HepG2 (cell line): ENCODE measurements at regions of chr2 and their contacts with region 1.

Region 1: DNA sequence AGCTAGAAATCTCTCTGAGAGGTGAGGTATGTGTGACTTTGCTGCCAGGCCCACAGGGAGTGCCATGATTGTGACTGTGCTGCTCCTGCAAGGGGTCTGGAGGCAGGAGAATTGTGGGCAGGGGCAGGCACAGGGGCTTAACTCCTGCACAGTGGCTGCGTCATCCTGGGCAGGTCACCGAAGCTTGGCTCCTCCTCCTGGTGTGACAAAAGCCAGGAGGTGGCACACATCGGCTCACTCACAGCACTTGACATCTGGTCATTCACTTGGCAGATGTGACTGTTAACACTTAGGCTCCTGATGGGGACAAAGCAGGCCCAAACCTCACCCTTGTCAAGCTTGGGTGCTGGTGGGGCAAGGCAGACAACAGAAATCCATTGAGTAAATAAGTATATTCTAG is 36.4 kb upstream of the GLI2 start:
- DNase-seq: no peak
- ATAC-seq: no peak
- H3K4me3 ChIP-seq: no peak overlapping the region
- H3K27ac ChIP-seq: no peak overlapping the region
- H3K4me1 ChIP-seq: no peaks in the 10 kb centered on the region
- H3K27me3 ChIP-seq: peaks cover 13 to 76% of the 10 kb centered on the region in 2 experiments
- CTCF ChIP-seq: no peak
- EP300 ChIP-seq: no peak
- POLR2A ChIP-seq: no peak
- RAD21 ChIP-seq: no peak

Region 2: GRCh38 chr2:120758181-120759144 is 59.2 kb after region 1 on chr2:
- CTCF ChIA-PET with region 1: no interaction called
- POLR2A ChIA-PET with region 1: no interaction called
- in situ Hi-C with region 1: no loop called
- intact Hi-C with region 1: loop called (anchors 1 kb)
- DNase-seq: no peak
- ATAC-seq: peak; percentile 34
- H3K4me3 ChIP-seq: no peak overlapping the region
- H3K27ac ChIP-seq: no peak overlapping the region
- H3K4me1 ChIP-seq: no peaks in the 10 kb centered on the region
- H3K27me3 ChIP-seq: peaks cover 4 to 50% of the 10 kb centered on the region in 2 experiments; a peak in 3 of 5 replicates
- CTCF ChIP-seq: no peak
- EP300 ChIP-seq: no peak
- POLR2A ChIP-seq: no peak
- RAD21 ChIP-seq: no peak

Region 3: DNA sequence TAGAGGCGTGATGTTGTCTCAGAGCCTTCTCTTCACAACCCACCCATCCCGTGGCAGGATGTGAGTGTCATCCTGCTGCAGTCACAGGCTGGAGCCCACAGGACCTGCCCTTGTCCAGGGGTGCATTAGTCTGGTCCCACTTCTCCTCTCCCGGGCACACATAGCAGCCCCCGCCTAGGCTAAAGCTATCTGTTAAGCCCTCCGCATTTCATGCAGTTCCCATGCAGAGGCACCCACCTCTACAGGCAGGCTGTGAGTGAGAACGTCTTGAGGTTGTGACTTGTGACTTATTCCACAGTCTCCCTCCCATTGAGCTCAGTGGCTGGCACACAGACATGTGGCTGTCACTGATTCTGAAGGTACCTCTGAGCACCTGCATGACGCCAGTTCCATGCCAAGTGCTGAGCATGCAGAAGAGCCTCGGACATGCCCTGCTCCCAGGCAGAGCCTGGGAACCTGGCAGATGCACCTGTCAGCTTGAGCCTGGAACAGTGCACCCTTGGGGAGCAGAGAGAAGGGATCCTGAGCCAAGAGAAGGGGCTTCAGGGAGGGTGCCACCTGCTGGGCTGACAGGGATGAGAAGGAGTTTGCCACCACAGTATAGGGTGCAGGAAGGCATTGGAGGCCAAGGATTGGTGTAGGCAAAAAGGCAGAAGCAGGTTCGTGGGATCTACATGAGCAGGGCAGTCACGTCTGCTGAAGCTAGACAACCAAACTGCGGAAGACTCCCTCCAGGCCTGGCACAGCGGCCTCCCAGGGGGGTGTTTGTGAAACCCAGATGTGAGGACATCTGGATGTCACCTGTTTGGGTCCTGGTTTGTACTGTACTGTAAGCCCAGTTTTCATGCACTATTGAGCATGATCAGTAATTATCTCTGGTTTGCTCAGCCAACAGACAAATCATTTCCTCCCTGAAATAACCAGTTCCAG is 250.0 kb after region 1 on chr2:
- CTCF ChIA-PET with region 1: interaction called, 22 read pairs
- POLR2A ChIA-PET with region 1: no interaction called
- in situ Hi-C with region 1: loop called (anchors 5 kb)
- intact Hi-C with region 1: loop called (anchors 1 kb)
- DNase-seq: peak; percentile 40
- ATAC-seq: peak; percentile 83
- H3K4me3 ChIP-seq: no peak overlapping the region
- H3K27ac ChIP-seq: no peak overlapping the region
- H3K4me1 ChIP-seq: no peaks in the 10 kb centered on the region
- H3K27me3 ChIP-seq: peaks cover 8 to 61% of the 10 kb centered on the region in 2 experiments; a peak in 3 of 5 replicates
- CTCF ChIP-seq: peak; percentile 77
- EP300 ChIP-seq: no peak
- POLR2A ChIP-seq: no peak
- RAD21 ChIP-seq: peak; percentile 69

Region 4: DNA sequence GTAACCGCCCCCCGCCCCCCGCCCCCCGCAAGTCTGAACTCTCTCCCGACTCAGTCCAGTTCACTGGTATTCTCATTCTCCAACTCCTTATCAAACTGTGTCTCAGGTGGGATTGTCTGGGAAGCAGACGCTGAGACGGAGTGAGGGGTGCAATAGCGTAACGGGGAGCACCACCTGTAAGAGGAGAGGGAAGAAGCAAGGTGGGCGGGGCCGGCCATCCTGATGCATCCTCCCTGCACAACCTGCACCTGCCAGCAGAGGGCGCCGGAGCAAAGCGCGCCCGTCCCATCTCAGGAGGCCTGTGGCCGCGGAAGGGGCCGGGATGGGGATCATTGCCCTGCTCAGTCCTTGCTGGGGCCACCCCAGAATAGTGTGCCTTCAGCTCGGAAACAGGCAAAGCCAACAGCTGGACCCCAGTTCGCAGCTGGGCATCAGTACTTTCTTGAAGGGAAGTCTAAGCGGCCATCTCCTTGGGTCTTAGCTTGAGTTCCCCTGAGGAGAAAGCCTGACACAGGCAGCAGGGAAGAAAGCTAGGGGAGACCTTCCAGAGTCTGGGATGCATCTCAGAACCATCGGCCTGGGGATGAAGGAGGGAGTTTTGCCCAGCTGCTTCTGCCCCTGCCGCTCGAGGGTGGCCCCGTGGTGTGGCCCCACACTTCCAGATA is 377.7 kb after region 1 on chr2:
- CTCF ChIA-PET with region 1: interaction called, 59 read pairs
- POLR2A ChIA-PET with region 1: no interaction called
- in situ Hi-C with region 1: loop called (anchors 5 kb)
- intact Hi-C with region 1: loop called (anchors 1 kb)
- DNase-seq: peak; percentile 52
- ATAC-seq: peak; percentile 76
- H3K4me3 ChIP-seq: no peak overlapping the region
- H3K27ac ChIP-seq: no peak overlapping the region
- H3K4me1 ChIP-seq: 0 out of 2 replicates have a peak, but pooled peaks cover 5% of the 10 kb centered on the region
- H3K27me3 ChIP-seq: peaks cover 23 to 80% of the 10 kb centered on the region in 2 experiments
- CTCF ChIP-seq: peak; percentile 91
- EP300 ChIP-seq: no peak
- POLR2A ChIP-seq: no peak
- RAD21 ChIP-seq: no peak; the same call in 1 of the 2 replicates